ENCODE measurements at regions of chr5 and their contacts with region 1.

Region 1: GRCh38 chr5:147935032-147935431 is 28.7 kb upstream of the C5orf46 start:
- DNase-seq: no peak

Region 2: GRCh38 chr5:147857302-147858129 is 77.5 kb before region 1 on chr5:
- intact Hi-C with region 1: loop called (anchors 2 kb)
- DNase-seq: peak in 8 of 10 donors; percentile 16 to 75 (median 60)

Region 3: GRCh38 chr5:147887024-147887627 is 47.9 kb before region 1 on chr5:
- intact Hi-C with region 1: loop called (anchors 2 kb)
- DNase-seq: no peak

Measured in posterior cingulate gyrus (tissue), 11 donors.